ENCODE measurements at regions of chr1 and their contacts with region 1.

Region 1: DNA sequence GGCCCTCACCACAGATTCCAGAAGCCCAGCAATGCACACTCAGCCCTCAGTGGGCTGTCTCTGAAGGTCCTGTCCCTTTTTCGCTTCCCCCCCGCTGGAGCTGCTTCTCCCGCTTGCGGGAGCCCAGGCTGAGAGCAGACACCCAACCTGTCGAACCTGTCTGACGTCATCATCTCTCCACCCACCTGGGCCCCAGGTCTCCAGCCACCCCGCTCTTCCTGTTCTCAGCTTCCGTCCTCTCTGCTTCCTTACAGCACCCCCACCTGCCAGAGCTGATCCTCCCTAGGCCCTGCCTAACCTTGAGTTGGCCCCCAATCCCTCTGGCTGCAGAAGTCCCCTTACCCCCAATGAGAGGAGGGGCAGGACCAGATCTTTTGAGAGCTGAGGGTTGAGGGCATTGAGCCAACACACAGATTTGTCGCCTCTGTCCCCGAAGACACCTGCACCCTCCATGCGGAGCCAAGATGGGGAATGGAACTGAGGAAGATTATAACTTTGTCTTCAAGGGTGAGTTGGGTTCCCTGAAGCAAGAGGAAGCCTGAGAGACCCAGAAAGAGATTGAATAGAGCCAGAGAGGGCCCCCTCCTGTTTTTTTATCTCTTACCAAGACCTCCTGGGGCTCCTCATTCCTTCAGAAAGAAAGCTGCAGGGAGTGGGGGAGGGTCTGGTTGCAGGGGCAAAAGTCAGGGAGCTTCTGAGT is at the start of gene RAB25:
- DNase-seq: peak; percentile 83
- ATAC-seq: peak; percentile 94
- H3K4me3 ChIP-seq: peak within 1 kb of the TSS; percentile 74 to 92
- H3K27ac ChIP-seq: peak within 1 kb of the TSS; percentile 84
- H3K4me1 ChIP-seq: peaks cover 0 to 16% of the 10 kb centered on the region in 2 experiments; a peak in 1 of 4 replicates
- H3K27me3 ChIP-seq: no peaks in the 10 kb centered on the region
- CTCF ChIP-seq: no peak; a peak in 1 of 6 replicates
- POLR2A ChIP-seq: peak; percentile 81
- RAD21 ChIP-seq: no peak
- total RNA-seq, gene RAB25: 142 TPM

Region 2: DNA sequence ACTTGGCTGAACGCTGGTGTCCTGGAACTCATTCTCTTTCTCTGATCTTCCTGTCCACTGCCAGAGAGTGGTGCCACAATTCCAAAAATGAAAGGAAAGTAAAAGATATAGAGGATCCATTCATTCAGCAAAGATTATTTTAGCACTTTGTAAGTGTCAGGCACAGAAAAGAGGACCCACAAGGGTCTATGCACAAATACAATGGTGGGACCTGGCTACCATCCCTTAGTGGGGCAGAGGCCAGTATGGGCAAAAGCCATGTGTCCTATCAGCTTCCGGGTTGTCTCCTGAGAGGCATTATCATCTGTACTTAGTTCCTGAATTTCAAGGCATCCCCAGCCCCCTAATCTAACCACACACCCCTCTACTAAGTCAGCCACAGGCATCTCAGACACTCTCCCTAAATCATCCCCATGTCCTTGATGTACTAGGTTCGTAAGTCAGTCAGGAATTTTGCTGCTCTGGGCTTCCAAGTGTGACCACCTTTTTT is 59.4 kb before region 1 on chr1:
- CTCF ChIA-PET with region 1: interaction called, 6 read pairs
- POLR2A ChIA-PET with region 1: no interaction called
- RAD21 ChIA-PET with region 1: no interaction called
- intact Hi-C with region 1: loop called (anchors 10 kb)
- DNase-seq: no peak
- ATAC-seq: no peak
- H3K4me3 ChIP-seq: no peak overlapping the region
- H3K27ac ChIP-seq: no peak overlapping the region
- H3K4me1 ChIP-seq: peaks cover 7 to 43% of the 10 kb centered on the region in 2 experiments
- H3K27me3 ChIP-seq: no peaks in the 10 kb centered on the region
- CTCF ChIP-seq: no peak
- POLR2A ChIP-seq: no peak
- RAD21 ChIP-seq: peak; percentile 46

Region 3: GRCh38 chr1:157301477-157302198 is 1240.6 kb after region 1 on chr1:
- CTCF ChIA-PET with region 1: no interaction called
- POLR2A ChIA-PET with region 1: no interaction called
- RAD21 ChIA-PET with region 1: no interaction called
- intact Hi-C with region 1: no loop called
- DNase-seq: no peak
- ATAC-seq: no peak
- H3K4me3 ChIP-seq: no peak overlapping the region
- H3K27ac ChIP-seq: no peak overlapping the region
- H3K4me1 ChIP-seq: no peaks in the 10 kb centered on the region
- H3K27me3 ChIP-seq: peaks cover 30% of the 10 kb centered on the region
- CTCF ChIP-seq: no peak
- POLR2A ChIP-seq: no peak
- RAD21 ChIP-seq: no peak